ENCODE measurements at regions of chr10 and their contacts with region 1.

Region 1: GRCh38 chr10:4849555-4850242 is 23.7 kb downstream of the AKR1E2 start:
- DNase-seq: peak; percentile 94
- ATAC-seq: peak; percentile 91

Region 2: DNA sequence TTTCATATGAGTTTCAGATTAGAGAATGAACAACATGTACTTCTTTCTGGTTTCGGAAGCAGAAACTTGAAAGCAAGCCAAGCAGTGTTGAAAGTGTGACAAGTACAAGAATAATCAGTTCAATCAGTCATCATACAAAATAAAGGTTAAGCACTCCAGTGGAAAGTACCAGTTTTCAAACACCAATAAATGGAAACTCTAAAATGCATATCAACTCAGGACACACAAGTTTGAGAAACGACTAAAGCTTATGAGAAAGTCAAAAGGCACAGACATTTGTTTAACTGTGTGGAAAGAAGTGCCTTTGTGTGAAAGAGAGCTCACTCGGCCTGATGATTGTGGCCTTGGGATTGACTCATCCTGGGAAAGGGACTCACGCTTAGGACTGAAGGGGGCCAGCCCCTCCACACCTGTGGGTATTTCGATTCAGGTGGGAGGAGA is 52.9 kb after region 1 on chr10:
- intact Hi-C with region 1: no loop called
- DNase-seq: no peak
- ATAC-seq: peak; percentile 91

Region 3: GRCh38 chr10:4981722-4982471 is 132.2 kb after region 1 on chr10:
- intact Hi-C with region 1: loop called (anchors 10 kb)
- DNase-seq: no peak
- ATAC-seq: peak; percentile 65

Region 4: GRCh38 chr10:5094265-5095205 is 244.8 kb after region 1 on chr10 and contains the start of gene AKR1C3:
- intact Hi-C with region 1: loop called (anchors 10 kb)
- DNase-seq: no peak
- ATAC-seq: peak; percentile 95
- total RNA-seq, gene AKR1C3: 23.2 TPM

Region 5: GRCh38 chr10:5274795-5275194 is 425.1 kb after region 1 on chr10:
- intact Hi-C with region 1: loop called (anchors 5 kb)
- DNase-seq: no peak
- ATAC-seq: peak; percentile 29